Left ventricle myocardium inferior (tissue), 1 donor: ENCODE measurements at regions of chr2 and their contacts with region 1.

Region 1: DNA sequence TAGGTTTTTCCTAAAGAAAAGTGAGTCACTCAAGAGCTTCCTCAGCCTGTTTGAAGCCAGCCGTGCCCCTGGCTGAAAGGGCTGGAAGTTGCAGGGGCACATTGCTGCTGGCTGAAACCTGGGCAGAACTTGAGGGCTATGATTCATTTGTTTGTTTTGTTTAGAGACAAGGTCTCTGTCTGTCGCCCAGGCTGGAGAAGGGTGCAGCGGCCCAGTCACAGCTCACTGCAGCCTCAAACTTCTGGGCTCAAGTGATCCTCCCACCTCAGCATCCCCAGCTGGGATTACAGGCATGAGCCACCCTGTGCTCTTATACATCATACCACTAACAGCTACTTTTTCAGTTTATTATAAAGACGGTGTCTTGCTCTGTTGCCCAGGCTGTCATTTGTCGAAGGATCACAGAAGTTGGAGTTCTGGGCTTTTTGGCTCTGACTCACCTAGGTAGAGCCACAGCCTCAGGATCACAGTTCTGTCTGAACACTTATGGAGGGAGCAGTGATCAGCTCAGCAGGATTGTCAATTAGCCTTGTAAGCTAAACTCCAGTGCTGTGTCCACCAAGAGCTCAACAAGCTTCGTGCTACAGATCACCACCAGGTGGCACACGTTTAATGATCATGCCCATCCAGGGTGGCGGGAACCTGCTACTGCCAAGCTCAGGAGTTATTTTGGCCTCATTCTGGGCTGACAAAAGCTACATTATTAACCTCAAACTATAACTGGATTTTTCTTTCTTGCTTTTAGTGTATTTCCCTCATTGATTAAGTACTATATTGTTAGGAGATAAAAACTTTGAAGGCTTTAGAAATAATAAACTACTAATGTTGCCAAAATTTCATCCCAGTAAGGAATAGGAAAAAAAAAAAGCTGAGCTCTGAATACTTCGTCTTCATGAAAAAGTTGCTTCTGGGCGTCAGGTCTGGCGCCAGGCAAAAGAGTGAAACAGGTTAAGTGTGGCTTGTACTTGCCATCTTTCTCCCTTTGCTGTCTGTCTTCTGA is 57.9 kb downstream of the ARHGEF33 start:
- DNase-seq: peak; percentile 46
- H3K4me3 ChIP-seq: no peak overlapping the region
- H3K27ac ChIP-seq: no peak overlapping the region
- H3K4me1 ChIP-seq: no peaks in the 10 kb centered on the region
- H3K27me3 ChIP-seq: no peaks in the 10 kb centered on the region
- CTCF ChIP-seq: peak; percentile 76

Region 2: DNA sequence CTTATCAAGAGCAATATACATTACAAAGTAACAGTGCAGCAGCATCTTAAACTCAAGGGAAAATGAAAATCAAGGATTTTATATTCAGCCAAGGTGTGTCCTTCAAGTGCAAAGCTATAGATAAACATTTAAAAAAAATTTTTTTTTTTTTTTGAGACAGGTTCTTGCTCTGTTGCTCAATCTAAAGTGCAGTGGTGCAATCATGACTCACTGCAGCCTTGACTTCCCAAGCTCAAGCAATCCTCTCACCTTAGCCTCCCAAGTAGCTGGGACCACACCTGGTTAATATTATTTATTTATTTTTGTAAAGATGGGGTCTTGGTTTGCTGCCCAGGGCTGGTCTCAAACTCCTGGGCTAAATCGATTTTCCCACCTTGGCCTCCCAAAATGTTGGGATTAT is 287.2 kb after region 1 on chr2:
- intact Hi-C with region 1: loop called (anchors 5 kb)
- DNase-seq: no peak
- H3K4me3 ChIP-seq: no peak overlapping the region
- H3K27ac ChIP-seq: no peak overlapping the region
- H3K4me1 ChIP-seq: peaks cover 5% of the 10 kb centered on the region
- H3K27me3 ChIP-seq: no peaks in the 10 kb centered on the region
- CTCF ChIP-seq: no peak